Ovary (tissue), 10 donors: ENCODE measurements at regions of chr7 and their contacts with region 1.

Region 1: DNA sequence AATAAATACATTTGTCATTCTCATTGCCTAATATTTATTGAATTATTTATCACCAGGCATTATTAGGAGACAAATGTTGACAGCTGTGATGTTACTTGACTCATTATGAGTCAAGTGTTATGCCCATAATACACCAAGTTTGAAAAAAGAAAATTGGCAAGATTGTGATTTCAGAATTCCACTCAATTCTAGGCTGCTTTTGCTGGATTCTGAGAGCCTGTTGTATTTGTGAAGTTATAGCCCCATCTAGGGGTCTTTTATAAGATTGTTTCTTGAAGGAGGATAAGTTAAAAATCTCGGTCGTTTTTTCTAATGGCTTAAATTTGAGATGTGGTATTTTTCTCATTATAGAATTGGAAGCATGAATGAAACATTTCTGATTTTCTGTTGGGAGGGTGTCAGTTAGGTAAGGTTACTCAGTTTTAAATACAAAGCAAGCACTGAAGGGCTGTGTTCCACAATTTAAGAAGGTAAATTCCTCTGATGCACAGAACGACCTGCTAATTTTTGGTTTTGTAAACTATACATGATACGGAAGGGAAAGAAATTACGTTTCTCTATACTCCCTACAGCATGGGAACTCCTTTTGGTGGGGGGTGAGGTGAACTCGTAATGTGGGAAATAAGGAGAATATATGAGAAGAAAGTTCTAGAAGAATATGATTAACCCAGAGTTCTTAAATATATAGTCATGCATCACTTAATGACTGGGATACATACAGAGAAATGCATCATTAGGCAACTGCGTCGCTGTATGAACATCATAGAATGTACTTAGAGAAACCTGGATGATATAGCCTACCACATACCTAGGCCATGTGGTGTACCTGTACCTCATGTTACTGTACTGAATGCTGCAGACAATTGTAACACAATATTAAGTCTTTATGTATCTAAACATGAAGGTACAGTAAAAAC is 2.6 kb downstream of the STK31 start:
- DNase-seq: no peak
- H3K4me3 ChIP-seq: no peak overlapping the region
- H3K27ac ChIP-seq: no peak overlapping the region
- H3K4me1 ChIP-seq: no peaks in the 10 kb centered on the region
- H3K27me3 ChIP-seq: no peaks in the 10 kb centered on the region
- CTCF ChIP-seq: peak; percentile 35 to 63 (median 59)
- EP300 ChIP-seq: no peak
- POLR2A ChIP-seq: no peak

Region 2: GRCh38 chr7:23261843-23262452 is 450.7 kb before region 1 on chr7:
- intact Hi-C with region 1: loop called in 1 of 4 experiments (anchors 10 kb)
- DNase-seq: peak; percentile 33 to 63 (median 51)
- H3K4me3 ChIP-seq: no peak overlapping the region
- H3K27ac ChIP-seq: no peak overlapping the region
- H3K4me1 ChIP-seq: no peaks in the 10 kb centered on the region
- H3K27me3 ChIP-seq: no peaks in the 10 kb centered on the region
- CTCF ChIP-seq: peak in 2 of 3 donors; percentile 31 to 34
- EP300 ChIP-seq: no peak
- POLR2A ChIP-seq: no peak

Region 3: GRCh38 chr7:23273141-23273599 is 439.5 kb before region 1 on chr7:
- intact Hi-C with region 1: loop called in 2 of 4 experiments (anchors 10 kb)
- DNase-seq: peak; percentile 81 to 91 (median 86)
- H3K4me3 ChIP-seq: no peak overlapping the region
- H3K27ac ChIP-seq: no peak overlapping the region
- H3K4me1 ChIP-seq: no peaks in the 10 kb centered on the region
- H3K27me3 ChIP-seq: no peaks in the 10 kb centered on the region
- CTCF ChIP-seq: peak; percentile 46 to 61 (median 46)
- EP300 ChIP-seq: no peak
- POLR2A ChIP-seq: no peak

Region 4: DNA sequence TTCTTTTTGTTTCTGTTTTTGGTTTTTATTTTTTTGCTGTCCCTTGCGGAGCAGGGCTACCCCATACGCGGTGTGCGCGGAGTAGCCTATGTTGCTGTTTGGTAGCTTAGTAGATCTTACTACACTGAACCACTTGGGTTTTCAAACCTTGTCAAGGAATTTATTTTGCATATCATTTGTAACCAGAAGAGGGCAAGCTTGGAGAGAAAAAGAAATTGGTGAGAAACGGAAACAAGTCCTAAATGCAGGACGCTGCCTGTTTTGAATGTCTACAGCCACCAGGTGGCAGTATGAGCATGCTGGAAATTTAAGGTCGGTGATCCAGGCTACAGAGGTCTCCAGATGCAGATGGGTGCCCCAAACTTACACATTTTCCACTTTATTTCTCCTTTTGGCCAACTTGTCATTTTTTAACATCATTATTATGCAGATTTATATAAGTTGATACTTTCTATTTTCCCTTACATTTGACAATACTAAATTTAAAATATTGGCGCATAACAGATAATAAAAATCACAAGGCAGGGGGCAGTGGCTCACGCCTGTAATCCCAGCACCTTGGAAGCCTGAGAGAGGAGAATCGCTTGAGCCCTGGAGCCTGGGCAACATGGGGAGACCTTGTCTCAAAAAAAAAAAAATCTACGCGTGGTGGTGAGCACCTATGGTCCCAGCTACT is 165.6 kb before region 1 on chr7:
- intact Hi-C with region 1: loop called in 2 of 4 experiments (anchors 5 kb)
- DNase-seq: peak; percentile 64 to 83 (median 79)
- H3K4me3 ChIP-seq: no peak overlapping the region
- H3K27ac ChIP-seq: no peak overlapping the region
- H3K4me1 ChIP-seq: no peaks in the 10 kb centered on the region
- H3K27me3 ChIP-seq: no peaks in the 10 kb centered on the region
- CTCF ChIP-seq: peak; percentile 85 to 92 (median 91)
- EP300 ChIP-seq: no peak
- POLR2A ChIP-seq: no peak

Region 5: GRCh38 chr7:23570592-23571200 is 141.9 kb before region 1 on chr7:
- intact Hi-C with region 1: loop called in 3 of 4 experiments (anchors 2 to 5 kb)
- DNase-seq: peak; percentile 56 to 77 (median 74)
- H3K4me3 ChIP-seq: no peak overlapping the region
- H3K27ac ChIP-seq: no peak overlapping the region
- H3K4me1 ChIP-seq: no peaks in the 10 kb centered on the region
- H3K27me3 ChIP-seq: no peaks in the 10 kb centered on the region
- CTCF ChIP-seq: peak; percentile 59 to 78 (median 67)
- EP300 ChIP-seq: no peak
- POLR2A ChIP-seq: no peak